CD8-positive, alpha-beta T cell (primary cell): ENCODE measurements at regions of chr22 and their contacts with region 1.

Region 1: GRCh38 chr22:38872172-38872830 is at the start of gene CBX6:
- DNase-seq: peak; percentile 90 to 98 (median 96)
- ATAC-seq: peak; percentile 70
- H3K4me3 ChIP-seq: peak within 1 kb of the TSS; percentile 91 to 98
- H3K4me3 Mint-ChIP-seq: peak within 1 kb of the TSS; percentile 89
- H3K27ac ChIP-seq: peak within 1 kb of the TSS; percentile 62 to 65
- H3K27ac Mint-ChIP-seq: peak within 1 kb of the TSS; percentile 81
- H3K4me1 ChIP-seq: peaks cover 41% of the 10 kb centered on the region
- H3K4me1 Mint-ChIP-seq: peaks cover 44% of the 10 kb centered on the region
- H3K27me3 ChIP-seq: no peaks in the 10 kb centered on the region
- H3K27me3 Mint-ChIP-seq: no peaks in the 10 kb centered on the region
- CTCF ChIP-seq: no peak
- total RNA-seq, gene CBX6: 36.0 to 39.5 TPM

Region 2: GRCh38 chr22:38656256-38657044 is 215.9 kb before region 1 on chr22 and contains the starts of genes CBY1 and FAM227A:
- CTCF ChIA-PET with region 1: no interaction called
- POLR2A ChIA-PET with region 1: no interaction called
- intact Hi-C with region 1: loop called in 1 of 2 experiments (anchors 5 kb)
- DNase-seq: peak; percentile 76 to 94 (median 87)
- ATAC-seq: peak; percentile 84
- H3K4me3 ChIP-seq: peak within 1 kb of the TSS; percentile 75 to 94
- H3K4me3 Mint-ChIP-seq: peak within 1 kb of the TSS; percentile 96
- H3K27ac ChIP-seq: peak within 1 kb of the TSS; percentile 94 to 96
- H3K27ac Mint-ChIP-seq: peak within 1 kb of the TSS; percentile 99
- H3K4me1 ChIP-seq: peaks cover 11% of the 10 kb centered on the region
- H3K4me1 Mint-ChIP-seq: peaks cover 30% of the 10 kb centered on the region
- H3K27me3 ChIP-seq: no peaks in the 10 kb centered on the region
- H3K27me3 Mint-ChIP-seq: no peaks in the 10 kb centered on the region
- CTCF ChIP-seq: no peak
- total RNA-seq, gene CBY1: 7.6 to 8.9 TPM
- total RNA-seq, gene FAM227A: 0.73 TPM in 1 of 2 experiments, not detected in the other

Region 3: GRCh38 chr22:38755911-38756532 is 116.3 kb before region 1 on chr22 and contains the start of gene SUN2:
- CTCF ChIA-PET with region 1: interaction called, 7 read pairs
- POLR2A ChIA-PET with region 1: interaction called, 6 read pairs
- intact Hi-C with region 1: loop called in 1 of 2 experiments (anchors 10 kb)
- DNase-seq: peak; percentile 90 to 97 (median 94)
- ATAC-seq: peak; percentile 66
- H3K4me3 ChIP-seq: peak within 1 kb of the TSS; percentile 91 to 96
- H3K4me3 Mint-ChIP-seq: peak within 1 kb of the TSS; percentile 98
- H3K27ac ChIP-seq: peak within 1 kb of the TSS; percentile 65 to 73
- H3K27ac Mint-ChIP-seq: peak within 1 kb of the TSS; percentile 99
- H3K4me1 ChIP-seq: peaks cover 57% of the 10 kb centered on the region
- H3K4me1 Mint-ChIP-seq: peaks cover 58% of the 10 kb centered on the region
- H3K27me3 ChIP-seq: no peaks in the 10 kb centered on the region
- H3K27me3 Mint-ChIP-seq: no peaks in the 10 kb centered on the region
- CTCF ChIP-seq: no peak
- total RNA-seq, gene SUN2: 431 to 454 TPM

Region 4: DNA sequence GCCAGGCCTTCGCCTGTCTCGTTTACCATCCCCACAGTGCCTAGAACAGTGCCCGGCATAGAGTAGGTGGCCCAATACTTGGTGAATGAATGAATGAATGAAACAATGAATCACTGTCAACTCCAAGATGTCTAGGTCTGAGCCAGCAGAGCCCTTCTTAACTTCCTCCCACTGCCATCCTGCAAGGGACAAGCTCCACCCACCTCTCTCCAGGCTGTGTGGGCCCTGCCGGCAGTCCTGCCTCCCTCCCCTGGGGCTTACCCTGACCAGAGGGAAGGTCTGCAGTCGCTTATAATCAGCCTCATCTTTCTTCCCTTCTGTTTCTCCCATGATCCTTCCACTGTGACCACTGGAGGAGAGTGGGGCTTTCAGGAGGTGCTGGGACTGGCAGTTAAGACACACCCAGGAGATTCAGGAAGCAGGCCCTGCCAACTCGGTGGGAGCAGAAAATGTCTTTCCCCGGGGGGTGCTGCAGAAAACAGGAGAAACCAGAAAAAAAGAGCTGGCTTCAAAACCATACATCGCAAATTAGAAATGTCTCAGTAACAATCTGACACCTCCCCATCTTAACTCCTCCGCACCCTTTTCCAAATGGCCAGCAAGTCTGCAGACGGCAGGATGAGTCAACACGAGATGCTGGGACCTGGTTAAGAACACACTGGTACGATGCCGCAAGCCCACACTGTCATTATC is 89.8 kb before region 1 on chr22:
- CTCF ChIA-PET with region 1: no interaction called
- POLR2A ChIA-PET with region 1: no interaction called
- intact Hi-C with region 1: no loop called
- DNase-seq: no peak
- ATAC-seq: no peak
- H3K4me3 ChIP-seq: no peak overlapping the region
- H3K4me3 Mint-ChIP-seq: no peak overlapping the region
- H3K27ac ChIP-seq: no peak overlapping the region
- H3K27ac Mint-ChIP-seq: no peak overlapping the region
- H3K4me1 ChIP-seq: no peaks in the 10 kb centered on the region
- H3K4me1 Mint-ChIP-seq: peaks cover 5% of the 10 kb centered on the region
- H3K27me3 ChIP-seq: no peaks in the 10 kb centered on the region
- H3K27me3 Mint-ChIP-seq: no peaks in the 10 kb centered on the region
- CTCF ChIP-seq: no peak

Region 5: DNA sequence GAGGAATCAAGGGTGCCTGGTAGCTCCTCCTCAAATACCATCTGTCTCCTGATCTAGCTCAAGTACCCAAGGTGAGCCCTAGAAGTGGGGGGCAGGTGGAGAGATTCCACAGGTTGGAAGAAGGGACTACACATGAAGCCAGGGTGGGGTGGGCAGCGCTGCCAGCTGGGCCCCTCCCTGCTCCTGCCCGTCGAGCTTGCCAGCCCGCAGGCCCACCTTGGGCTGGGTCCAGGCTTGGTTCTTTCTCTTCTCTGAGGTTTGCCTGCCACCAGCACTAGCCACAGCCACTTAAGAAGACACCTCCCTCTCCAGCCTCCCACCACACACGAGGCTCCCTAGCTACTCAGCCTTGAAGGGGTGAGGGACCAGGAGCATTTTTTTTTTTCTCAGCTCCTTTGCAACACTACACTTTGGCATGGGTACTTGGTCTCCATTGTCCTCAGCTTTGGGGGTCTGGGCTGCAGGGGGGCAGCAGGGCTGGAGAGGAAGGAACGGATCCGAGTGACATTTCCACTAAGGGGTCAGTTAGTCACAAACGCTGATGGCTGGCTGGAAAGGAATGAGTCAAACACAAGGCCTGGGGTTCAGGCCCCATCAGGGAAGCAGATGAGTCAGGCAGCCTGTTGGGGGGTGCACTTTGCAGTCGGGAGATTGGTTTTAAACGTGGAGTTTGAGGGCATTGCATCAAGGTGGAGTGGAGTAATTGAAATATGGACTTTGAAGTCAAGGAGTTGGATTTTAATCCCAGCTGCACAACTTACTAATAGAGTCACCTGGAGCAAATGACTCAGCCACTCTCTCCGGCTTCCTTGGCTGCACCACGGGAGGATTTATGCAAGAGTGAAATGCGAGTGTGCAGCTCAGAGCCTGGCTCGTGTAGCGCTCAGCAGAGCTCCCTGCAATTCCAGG is 21.1 kb before region 1 on chr22:
- CTCF ChIA-PET with region 1: interaction called, 17 read pairs
- POLR2A ChIA-PET with region 1: no interaction called
- intact Hi-C with region 1: no loop called
- DNase-seq: no peak
- ATAC-seq: no peak
- H3K4me3 ChIP-seq: no peak overlapping the region
- H3K4me3 Mint-ChIP-seq: no peak overlapping the region
- H3K27ac ChIP-seq: no peak overlapping the region
- H3K27ac Mint-ChIP-seq: no peak overlapping the region
- H3K4me1 ChIP-seq: no peaks in the 10 kb centered on the region
- H3K4me1 Mint-ChIP-seq: no peaks in the 10 kb centered on the region
- H3K27me3 ChIP-seq: no peaks in the 10 kb centered on the region
- H3K27me3 Mint-ChIP-seq: peaks cover 8% of the 10 kb centered on the region
- CTCF ChIP-seq: no peak

Region 6: GRCh38 chr22:39021552-39022250 is 149.4 kb after region 1 on chr22:
- CTCF ChIA-PET with region 1: interaction called, 4 read pairs
- POLR2A ChIA-PET with region 1: no interaction called
- intact Hi-C with region 1: loop called in 1 of 2 experiments (anchors 5 kb)
- DNase-seq: peak in 1 of 9 experiments; percentile 51
- ATAC-seq: no peak
- H3K4me3 ChIP-seq: peak overlapping the region; percentile 69 to 76
- H3K4me3 Mint-ChIP-seq: peak overlapping the region; percentile 94
- H3K27ac ChIP-seq: peak overlapping the region; percentile 59 to 84
- H3K27ac Mint-ChIP-seq: peak overlapping the region; percentile 97
- H3K4me1 ChIP-seq: peaks cover 38% of the 10 kb centered on the region
- H3K4me1 Mint-ChIP-seq: peaks cover 61% of the 10 kb centered on the region
- H3K27me3 ChIP-seq: no peaks in the 10 kb centered on the region
- H3K27me3 Mint-ChIP-seq: no peaks in the 10 kb centered on the region
- CTCF ChIP-seq: no peak

Region 7: DNA sequence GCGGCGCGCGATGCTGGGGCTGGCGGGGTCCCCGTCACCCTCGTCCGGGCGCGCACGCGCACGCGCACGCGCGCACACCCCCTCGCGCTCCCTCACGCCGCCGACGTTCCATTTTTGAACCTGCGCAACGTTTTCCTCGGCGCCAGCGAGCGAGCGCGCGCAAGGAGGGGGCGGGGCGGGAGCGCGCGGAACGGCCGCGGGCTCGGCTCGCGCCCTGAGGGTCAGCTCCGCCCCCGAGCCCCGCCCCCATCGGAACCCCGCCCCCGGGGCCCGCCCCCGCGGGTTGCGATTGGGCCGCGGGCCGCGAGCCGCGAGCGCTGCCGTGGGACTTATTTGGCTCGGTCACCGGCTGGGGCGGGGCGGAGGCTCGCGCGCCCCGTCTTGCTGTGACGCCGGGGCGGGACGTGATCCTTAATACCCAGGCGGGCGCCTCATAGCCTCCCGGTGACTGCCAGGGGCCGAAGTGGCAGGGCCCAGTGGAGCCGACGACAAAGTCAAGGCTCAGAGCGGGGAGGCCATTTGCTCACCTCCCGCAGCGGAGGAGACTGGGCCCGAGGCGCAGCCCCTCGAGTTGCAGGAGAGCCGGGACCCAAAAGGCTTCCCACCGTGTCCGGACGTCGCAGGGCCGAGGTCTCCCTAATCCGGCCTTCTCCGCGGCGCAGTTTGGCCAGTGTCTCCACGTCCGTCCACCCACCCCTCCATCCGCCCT is 280.4 kb after region 1 on chr22 and contains the start of gene CBX7:
- CTCF ChIA-PET with region 1: interaction called, 15 read pairs
- POLR2A ChIA-PET with region 1: interaction called, 3 read pairs
- intact Hi-C with region 1: loop called (anchors 1 kb)
- DNase-seq: peak; percentile 84 to 99 (median 92)
- ATAC-seq: peak; percentile 82
- H3K4me3 ChIP-seq: peak within 1 kb of the TSS; percentile 83 to 89
- H3K4me3 Mint-ChIP-seq: peak within 1 kb of the TSS; percentile 92
- H3K27ac ChIP-seq: peak within 1 kb of the TSS; percentile 86 to 87
- H3K27ac Mint-ChIP-seq: peak within 1 kb of the TSS; percentile 91
- H3K4me1 ChIP-seq: peaks cover 51% of the 10 kb centered on the region
- H3K4me1 Mint-ChIP-seq: peaks cover 42% of the 10 kb centered on the region
- H3K27me3 ChIP-seq: no peaks in the 10 kb centered on the region
- H3K27me3 Mint-ChIP-seq: no peaks in the 10 kb centered on the region
- CTCF ChIP-seq: no peak
- total RNA-seq, gene CBX7: 34.2 to 37.2 TPM